ENCODE measurements at regions of chr1 and their contacts with region 1.

Region 1: GRCh38 chr1:192477630-192478029 is 97.9 kb upstream of the RGS1 start:
- DNase-seq: peak; percentile 62
- ATAC-seq: peak; percentile 69
- H3K4me3 ChIP-seq: no peak overlapping the region
- H3K27ac ChIP-seq: no peak overlapping the region
- H3K4me1 ChIP-seq: peaks cover 8% of the 10 kb centered on the region
- H3K27me3 ChIP-seq: no peaks in the 10 kb centered on the region
- CTCF ChIP-seq: peak; percentile 72

Region 2: DNA sequence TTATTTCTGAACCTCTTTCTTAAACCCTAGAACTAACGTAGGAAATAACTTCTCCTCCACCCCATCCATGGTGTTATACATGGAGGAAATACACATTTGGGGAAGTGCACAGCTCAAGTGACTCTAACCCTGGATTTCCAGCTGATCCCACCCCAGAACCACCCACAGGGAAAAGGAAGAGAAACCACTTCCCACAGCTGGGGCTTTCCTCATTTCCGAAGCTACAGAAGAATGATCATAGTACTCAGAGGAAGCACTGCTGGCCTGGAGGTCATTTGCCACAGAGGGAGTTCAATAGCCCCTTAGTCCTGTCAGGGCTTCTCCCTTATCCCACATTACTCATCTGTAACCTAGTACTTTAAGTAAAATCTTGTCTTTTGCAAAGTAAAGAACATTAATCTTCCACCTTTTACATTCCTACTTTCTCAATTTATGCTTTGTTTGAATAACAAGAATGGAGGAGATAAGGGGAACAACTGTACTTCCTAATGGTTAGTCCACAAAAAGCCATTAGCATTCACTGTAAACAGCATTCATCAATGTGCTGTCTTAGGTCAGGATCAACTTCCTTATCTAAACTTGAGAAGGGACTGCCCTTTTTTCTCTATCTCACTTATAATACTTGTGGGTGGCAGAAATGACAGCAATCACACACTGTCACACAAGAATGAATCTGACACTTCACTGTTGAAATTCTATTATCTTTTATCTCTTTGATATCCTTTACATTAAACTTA is 35.0 kb after region 1 on chr1:
- CTCF ChIA-PET with region 1: no interaction called
- POLR2A ChIA-PET with region 1: no interaction called
- intact Hi-C with region 1: no loop called
- DNase-seq: no peak
- ATAC-seq: no peak
- H3K4me3 ChIP-seq: no peak overlapping the region
- H3K27ac ChIP-seq: no peak overlapping the region
- H3K4me1 ChIP-seq: peaks cover 11% of the 10 kb centered on the region
- H3K27me3 ChIP-seq: no peaks in the 10 kb centered on the region
- CTCF ChIP-seq: no peak

Region 3: GRCh38 chr1:192580351-192580962 is 102.8 kb after region 1 on chr1:
- CTCF ChIA-PET with region 1: interaction called, 9 read pairs
- POLR2A ChIA-PET with region 1: no interaction called
- intact Hi-C with region 1: loop called (anchors 1 kb)
- DNase-seq: peak; percentile 71
- ATAC-seq: peak; percentile 97
- H3K4me3 ChIP-seq: no peak overlapping the region
- H3K27ac ChIP-seq: no peak overlapping the region
- H3K4me1 ChIP-seq: peaks cover 4% of the 10 kb centered on the region; the same call in 1 of the 2 replicates
- H3K27me3 ChIP-seq: no peaks in the 10 kb centered on the region
- CTCF ChIP-seq: peak; percentile 80

Region 4: DNA sequence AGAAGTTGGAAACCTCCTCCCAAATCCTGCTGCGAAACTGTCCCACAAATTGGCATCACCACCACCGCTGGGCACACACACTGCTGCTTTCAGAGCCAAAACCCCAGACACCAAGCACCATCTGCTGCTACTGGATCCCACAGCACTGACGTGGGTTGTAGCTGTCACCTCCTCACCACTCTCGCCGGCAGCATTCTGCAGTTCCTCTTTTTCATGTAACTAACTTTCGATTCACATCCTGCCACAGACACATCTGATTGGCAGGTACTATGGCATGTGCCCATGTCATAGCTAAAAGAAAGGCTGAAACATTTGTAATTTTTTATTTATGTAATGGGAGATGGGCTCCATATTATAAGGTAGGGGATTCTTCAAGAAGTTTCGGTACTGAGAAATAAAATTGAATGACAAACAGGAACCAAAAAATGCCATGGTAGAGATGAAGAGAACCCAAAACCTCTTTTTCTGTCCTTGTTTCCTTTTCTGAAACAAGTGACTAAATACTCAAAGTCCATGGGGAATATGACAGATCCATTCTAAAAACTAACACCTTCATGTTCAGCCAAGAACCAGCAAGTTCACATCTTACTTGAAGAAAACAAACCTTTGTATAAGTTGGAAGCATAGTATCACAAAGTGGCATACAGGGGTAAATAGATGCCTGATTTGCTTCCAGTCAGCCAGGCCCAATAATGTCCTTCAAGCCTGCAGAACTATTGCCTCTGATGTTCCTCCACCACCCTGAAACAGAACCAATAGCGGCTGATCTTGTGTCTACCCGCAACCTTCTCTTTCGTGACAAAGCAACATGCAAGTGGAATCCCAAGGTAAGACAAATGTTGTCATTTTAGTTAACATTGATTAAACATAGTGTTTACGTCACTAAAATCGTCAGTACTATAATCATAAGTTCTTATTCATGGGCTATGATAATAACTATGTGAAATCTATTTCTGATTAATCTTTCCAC is 131.8 kb after region 1 on chr1:
- CTCF ChIA-PET with region 1: no interaction called
- POLR2A ChIA-PET with region 1: no interaction called
- intact Hi-C with region 1: loop called (anchors 2 kb)
- DNase-seq: no peak
- ATAC-seq: no peak
- H3K4me3 ChIP-seq: no peak overlapping the region
- H3K27ac ChIP-seq: no peak overlapping the region
- H3K4me1 ChIP-seq: no peaks in the 10 kb centered on the region
- H3K27me3 ChIP-seq: no peaks in the 10 kb centered on the region
- CTCF ChIP-seq: no peak

Region 5: GRCh38 chr1:193031438-193031837 is 553.8 kb after region 1 on chr1:
- CTCF ChIA-PET with region 1: no interaction called
- POLR2A ChIA-PET with region 1: no interaction called
- intact Hi-C with region 1: loop called (anchors 5 kb)
- DNase-seq: peak; percentile 20
- ATAC-seq: peak; percentile 22; the same call in 1 of the 2 replicates
- H3K4me3 ChIP-seq: no peak overlapping the region
- H3K27ac ChIP-seq: no peak overlapping the region
- H3K4me1 ChIP-seq: no peaks in the 10 kb centered on the region
- H3K27me3 ChIP-seq: no peaks in the 10 kb centered on the region
- CTCF ChIP-seq: peak; percentile 56

Region 6: DNA sequence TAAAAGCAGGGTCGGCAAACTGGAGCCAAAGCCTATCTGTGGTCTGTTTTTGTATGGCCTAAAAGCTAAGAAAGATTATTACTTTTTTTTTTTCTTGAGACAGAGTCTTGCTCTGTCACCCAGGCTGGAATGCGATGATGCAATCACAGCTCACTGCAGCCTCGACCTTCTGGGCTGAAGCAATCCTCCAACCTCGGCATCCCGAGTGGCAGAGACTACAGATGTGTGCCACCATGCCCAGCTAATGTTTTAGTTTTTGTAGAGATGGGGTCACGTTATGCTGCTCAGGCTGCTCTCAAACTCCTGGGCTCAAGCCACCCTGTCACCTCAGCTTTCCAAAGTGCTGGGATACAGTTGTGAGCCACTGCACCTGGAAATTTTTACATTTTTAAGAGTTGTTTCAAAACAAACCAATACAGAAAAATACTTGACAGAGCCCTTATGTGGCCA is 634.0 kb after region 1 on chr1:
- CTCF ChIA-PET with region 1: no interaction called
- POLR2A ChIA-PET with region 1: no interaction called
- intact Hi-C with region 1: loop called (anchors 10 kb)
- DNase-seq: peak; percentile 66
- ATAC-seq: peak; percentile 61
- H3K4me3 ChIP-seq: peak overlapping the region; percentile 45; the same call in 1 of the 2 replicates
- H3K27ac ChIP-seq: peak overlapping the region; percentile 64
- H3K4me1 ChIP-seq: peaks cover 44% of the 10 kb centered on the region
- H3K27me3 ChIP-seq: no peaks in the 10 kb centered on the region
- CTCF ChIP-seq: no peak

Measured in PC-3 (cell line).